Left ventricle myocardium inferior (tissue), 1 donor: ENCODE measurements at regions of chr7 and their contacts with region 1.

Region 1: GRCh38 chr7:36291387-36292316 is 98.0 kb upstream of the ANLN start:
- DNase-seq: peak; percentile 84
- H3K4me3 ChIP-seq: peak overlapping the region; percentile 58
- H3K27ac ChIP-seq: peak overlapping the region; percentile 87
- H3K4me1 ChIP-seq: peaks cover 47% of the 10 kb centered on the region
- H3K27me3 ChIP-seq: no peaks in the 10 kb centered on the region
- CTCF ChIP-seq: peak; percentile 97

Region 2: DNA sequence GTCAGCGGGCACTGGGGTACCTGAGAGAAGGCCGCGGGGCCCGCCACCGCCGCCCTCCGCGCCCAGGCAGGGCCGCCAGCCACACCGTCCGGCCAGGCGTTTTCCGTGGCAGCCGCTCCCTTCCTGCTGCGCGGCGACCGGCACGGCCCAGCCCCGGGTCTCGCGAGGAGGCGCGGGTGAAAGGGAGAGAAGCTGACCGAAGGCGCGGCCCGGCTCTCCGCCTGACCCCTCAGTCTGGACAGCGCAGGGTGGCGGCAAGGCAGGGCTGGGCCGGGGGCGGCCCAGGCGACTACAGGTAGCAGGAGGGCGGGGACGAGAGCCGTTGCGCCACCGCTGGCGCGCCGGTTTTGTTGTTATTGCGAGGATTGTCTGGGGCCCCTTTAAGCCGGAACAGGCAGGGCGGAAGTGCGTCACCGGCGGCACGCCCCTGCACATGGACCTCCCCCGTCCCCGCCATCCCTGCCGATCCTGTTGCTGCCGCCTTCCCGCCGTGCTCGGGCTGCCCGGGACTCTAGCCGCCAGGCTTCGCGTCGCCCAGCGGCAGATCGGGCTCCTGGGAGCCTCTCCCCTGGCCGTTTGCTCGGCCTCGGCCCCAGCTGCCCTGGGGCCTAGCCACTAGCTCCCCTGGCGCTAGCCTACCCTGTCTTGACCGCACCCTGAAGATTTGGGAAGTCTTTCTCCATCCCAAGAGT is 596.7 kb before region 1 on chr7 and contains the start of gene HERPUD2:
- intact Hi-C with region 1: no loop called
- DNase-seq: peak; percentile 94
- H3K4me3 ChIP-seq: peak within 1 kb of the TSS; percentile 92
- H3K27ac ChIP-seq: peak within 1 kb of the TSS; percentile 97
- H3K4me1 ChIP-seq: peaks cover 64% of the 10 kb centered on the region
- H3K27me3 ChIP-seq: no peaks in the 10 kb centered on the region
- CTCF ChIP-seq: no peak
- total RNA-seq, gene HERPUD2: 13.6 TPM

Region 3: DNA sequence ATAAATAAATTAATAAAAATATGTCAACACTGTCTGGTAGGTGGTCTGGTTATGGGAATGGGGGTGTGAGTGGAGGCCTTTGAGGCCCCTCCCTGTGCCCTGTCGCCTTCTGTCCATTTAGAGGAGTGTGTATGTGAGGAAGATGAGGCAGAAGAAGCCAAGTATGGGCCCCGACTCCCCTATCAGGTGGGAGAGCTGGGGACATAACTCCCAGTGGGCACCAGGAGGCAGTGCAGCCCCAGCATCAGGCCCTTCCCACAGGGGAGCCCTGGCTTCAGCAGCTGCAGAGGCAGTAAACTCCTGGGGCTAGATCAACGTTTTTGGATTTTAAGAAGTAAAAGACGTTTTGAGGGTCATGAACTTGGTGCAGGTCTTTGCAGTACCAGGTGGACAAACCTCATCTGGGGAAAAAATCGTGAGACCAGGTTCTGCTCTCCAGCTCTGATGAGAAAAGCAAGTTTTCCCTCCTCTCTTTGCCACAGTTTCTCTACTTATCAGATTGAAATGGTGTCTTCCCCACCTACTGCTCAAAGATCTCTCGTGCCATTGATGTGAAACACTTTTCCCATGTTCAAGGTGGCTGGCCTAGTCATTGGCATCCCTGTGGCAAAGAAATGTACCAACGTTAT is 306.4 kb before region 1 on chr7:
- intact Hi-C with region 1: loop called (anchors 5 kb)
- DNase-seq: peak; percentile 76
- H3K4me3 ChIP-seq: no peak overlapping the region
- H3K27ac ChIP-seq: no peak overlapping the region
- H3K4me1 ChIP-seq: no peaks in the 10 kb centered on the region
- H3K27me3 ChIP-seq: no peaks in the 10 kb centered on the region
- CTCF ChIP-seq: peak; percentile 94

Region 4: DNA sequence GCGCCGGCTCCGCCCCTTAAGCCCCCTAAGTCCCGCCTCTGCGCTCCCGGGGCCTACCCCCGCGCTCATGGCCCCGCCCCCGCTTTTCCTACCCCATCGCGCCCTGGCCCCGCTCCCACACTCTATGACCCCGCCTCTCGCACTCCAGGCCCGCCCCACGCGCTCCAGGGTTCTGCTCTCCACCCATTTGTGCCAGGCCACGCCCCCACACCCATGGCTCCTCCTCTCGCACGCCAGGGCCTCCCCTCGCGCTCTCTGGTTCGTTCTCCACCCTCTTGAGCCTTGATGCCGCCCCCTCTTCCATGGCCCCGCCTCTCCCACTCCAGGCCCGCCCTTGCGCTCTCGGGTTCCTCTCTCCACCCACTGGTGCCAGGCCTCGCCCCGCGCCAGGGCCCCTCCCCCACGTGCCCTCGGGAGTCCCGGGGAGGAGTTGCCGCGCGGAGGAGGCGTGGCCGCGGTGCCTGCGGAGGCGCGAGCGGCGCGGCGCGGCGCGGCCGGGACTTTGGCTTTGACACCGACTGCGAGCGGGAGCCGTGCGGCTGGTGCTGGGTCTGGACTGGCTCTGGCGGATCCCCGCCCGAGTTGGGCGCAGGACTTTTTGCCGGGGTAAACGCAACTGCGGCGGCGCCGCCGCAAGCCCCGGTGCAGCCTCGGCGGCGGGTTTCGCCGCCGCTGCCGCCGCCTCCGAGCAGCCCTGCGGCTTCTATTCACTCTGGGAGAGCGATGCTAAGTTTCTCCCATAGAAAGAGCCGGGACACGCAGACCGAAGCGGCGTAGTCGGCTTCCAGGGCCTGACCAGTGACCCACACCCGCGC is 138.7 kb before region 1 on chr7 and contains the start of gene EEPD1:
- intact Hi-C with region 1: loop called (anchors 10 kb)
- DNase-seq: peak; percentile 100
- H3K4me3 ChIP-seq: peak within 1 kb of the TSS; percentile 88
- H3K27ac ChIP-seq: peak within 1 kb of the TSS; percentile 92
- H3K4me1 ChIP-seq: peaks cover 54% of the 10 kb centered on the region
- H3K27me3 ChIP-seq: no peaks in the 10 kb centered on the region
- CTCF ChIP-seq: no peak
- total RNA-seq, gene EEPD1: 7.1 TPM